Heart left ventricle (tissue), 16 donors: ENCODE measurements at regions of chr11 and their contacts with region 1.

Region 1: GRCh38 chr11:133082851-133083488 is 449.3 kb downstream of the OPCML start:
- DNase-seq: peak; percentile 51 to 83 (median 60)
- ATAC-seq: peak; percentile 47 to 97 (median 86)
- H3K4me3 ChIP-seq: peak overlapping the region; percentile 4 to 51 (median 42)
- H3K27ac ChIP-seq: no peak overlapping the region
- H3K4me1 ChIP-seq: peaks cover 0 to 10% (median 4%) of the 10 kb centered on the region in 12 donors
- H3K27me3 ChIP-seq: peaks cover 3 to 77% (median 15%) of the 10 kb centered on the region in 9 donors
- CTCF ChIP-seq: peak; percentile 20 to 100 (median 82)
- POLR2A ChIP-seq: no peak

Region 2: GRCh38 chr11:133115099-133115498 is 32.1 kb after region 1 on chr11:
- intact Hi-C with region 1: no loop called
- DNase-seq: peak in 4 of 5 donors; percentile 21 to 80 (median 41)
- ATAC-seq: peak in 3 of 4 donors; percentile 68 to 76 (median 73)
- H3K4me3 ChIP-seq: no peak overlapping the region
- H3K27ac ChIP-seq: no peak overlapping the region
- H3K4me1 ChIP-seq: peaks cover 0 to 18% (median 0%) of the 10 kb centered on the region in 12 donors
- H3K27me3 ChIP-seq: no peaks in the 10 kb centered on the region
- CTCF ChIP-seq: no peak
- POLR2A ChIP-seq: no peak

Region 3: GRCh38 chr11:133156986-133157745 is 74.2 kb after region 1 on chr11:
- intact Hi-C with region 1: loop called in 8 of 10 experiments (anchors 2 to 5 kb)
- DNase-seq: peak in 1 of 5 donors; percentile 35
- ATAC-seq: peak; percentile 55 to 71 (median 65)
- H3K4me3 ChIP-seq: no peak overlapping the region
- H3K27ac ChIP-seq: no peak overlapping the region
- H3K4me1 ChIP-seq: no peaks in the 10 kb centered on the region
- H3K27me3 ChIP-seq: peaks cover 0 to 62% (median 14%) of the 10 kb centered on the region in 9 donors
- CTCF ChIP-seq: peak in 10 of 12 donors; percentile 18 to 56 (median 37)
- POLR2A ChIP-seq: no peak

Region 4: DNA sequence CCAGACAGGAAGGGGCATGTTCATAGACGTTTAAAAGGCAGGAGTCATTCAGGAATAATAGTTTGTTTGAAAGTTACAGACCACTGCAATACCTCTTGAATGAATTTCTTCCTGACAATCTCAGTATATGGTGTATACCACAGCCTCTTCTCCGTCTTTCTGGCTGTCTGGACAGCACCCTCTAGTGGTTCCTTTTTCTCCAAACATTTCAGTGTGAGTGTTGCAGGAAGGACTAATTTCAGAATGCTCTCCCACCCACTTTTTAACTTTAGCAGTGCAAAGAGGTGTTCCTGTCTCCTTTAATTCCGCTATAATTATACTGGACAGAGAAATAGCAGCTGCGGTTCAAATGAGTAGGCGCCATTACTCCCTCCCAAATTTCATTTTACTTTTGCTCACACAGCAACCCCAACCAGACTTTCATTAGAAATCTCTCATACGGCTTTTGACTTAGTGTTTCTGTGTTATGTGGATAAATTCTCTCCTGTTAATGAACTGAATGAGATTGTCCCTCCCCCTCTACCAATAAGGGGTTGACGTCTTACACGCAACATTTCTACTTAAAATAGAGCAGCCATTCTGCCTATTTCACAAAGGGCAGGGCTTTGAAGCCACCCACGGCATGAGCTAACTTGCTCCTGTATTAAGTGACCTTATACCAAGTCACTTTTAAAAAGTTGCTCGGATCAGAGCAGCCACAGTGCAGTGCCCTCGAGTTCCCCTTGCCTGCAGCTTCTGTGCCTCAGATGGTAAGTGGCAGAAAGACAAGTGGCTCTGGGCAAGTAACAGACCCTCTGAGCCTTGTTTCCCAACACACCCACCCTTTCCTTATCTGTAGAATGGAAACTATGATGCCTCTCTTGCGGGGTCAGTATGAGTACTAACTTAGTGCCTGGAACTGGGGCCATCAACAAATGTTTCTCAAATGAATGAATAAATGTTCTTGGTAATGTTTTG is 80.8 kb after region 1 on chr11:
- intact Hi-C with region 1: loop called in 8 of 10 experiments (anchors 2 to 5 kb)
- DNase-seq: peak in 2 of 5 donors; percentile 30 to 45
- ATAC-seq: peak; percentile 64 to 93 (median 82)
- H3K4me3 ChIP-seq: peak overlapping the region in 3 of 12 donors; percentile 7 to 35 (median 24)
- H3K27ac ChIP-seq: peak overlapping the region in 3 of 12 donors; percentile 25 to 53 (median 39)
- H3K4me1 ChIP-seq: peaks cover 0 to 8% (median 0%) of the 10 kb centered on the region in 12 donors
- H3K27me3 ChIP-seq: peaks cover 0 to 13% (median 0%) of the 10 kb centered on the region in 9 donors
- CTCF ChIP-seq: peak; percentile 59 to 85 (median 76)
- POLR2A ChIP-seq: no peak

Region 5: DNA sequence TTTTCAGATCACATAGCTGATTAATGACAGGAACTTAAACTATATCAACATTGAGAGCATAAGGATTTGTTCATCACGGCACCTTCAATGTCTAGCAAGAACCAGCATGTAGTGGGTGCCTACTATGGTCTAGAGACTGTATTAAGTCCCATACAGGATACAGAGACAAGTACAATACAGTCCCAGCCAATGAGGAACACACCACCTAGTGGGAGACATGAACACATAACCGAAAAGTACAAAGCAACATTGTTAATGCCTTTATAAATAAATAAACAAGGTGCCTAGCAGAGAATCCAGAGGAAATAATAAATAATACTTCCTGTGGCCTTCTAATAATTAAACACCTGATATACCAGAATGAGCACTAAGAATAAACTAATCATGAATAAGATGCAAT is 537.0 kb after region 1 on chr11:
- intact Hi-C with region 1: loop called in 2 of 10 experiments (anchors 5 to 10 kb)
- DNase-seq: no peak
- ATAC-seq: peak in 3 of 4 donors; percentile 49 to 75 (median 69)
- H3K4me3 ChIP-seq: no peak overlapping the region
- H3K27ac ChIP-seq: no peak overlapping the region
- H3K4me1 ChIP-seq: no peaks in the 10 kb centered on the region
- H3K27me3 ChIP-seq: peaks cover 0 to 5% (median 0%) of the 10 kb centered on the region in 9 donors
- CTCF ChIP-seq: peak in 11 of 12 donors; percentile 13 to 48 (median 34)
- POLR2A ChIP-seq: no peak

Region 6: GRCh38 chr11:133828871-133829270 is 745.9 kb after region 1 on chr11:
- intact Hi-C with region 1: loop called in 8 of 10 experiments (anchors 2 to 5 kb)
- DNase-seq: no peak
- ATAC-seq: no peak
- H3K4me3 ChIP-seq: no peak overlapping the region
- H3K27ac ChIP-seq: no peak overlapping the region
- H3K4me1 ChIP-seq: peaks cover 0 to 6% (median 0%) of the 10 kb centered on the region in 12 donors
- H3K27me3 ChIP-seq: peaks cover 0 to 13% (median 0%) of the 10 kb centered on the region in 9 donors
- CTCF ChIP-seq: no peak
- POLR2A ChIP-seq: no peak

Region 7: DNA sequence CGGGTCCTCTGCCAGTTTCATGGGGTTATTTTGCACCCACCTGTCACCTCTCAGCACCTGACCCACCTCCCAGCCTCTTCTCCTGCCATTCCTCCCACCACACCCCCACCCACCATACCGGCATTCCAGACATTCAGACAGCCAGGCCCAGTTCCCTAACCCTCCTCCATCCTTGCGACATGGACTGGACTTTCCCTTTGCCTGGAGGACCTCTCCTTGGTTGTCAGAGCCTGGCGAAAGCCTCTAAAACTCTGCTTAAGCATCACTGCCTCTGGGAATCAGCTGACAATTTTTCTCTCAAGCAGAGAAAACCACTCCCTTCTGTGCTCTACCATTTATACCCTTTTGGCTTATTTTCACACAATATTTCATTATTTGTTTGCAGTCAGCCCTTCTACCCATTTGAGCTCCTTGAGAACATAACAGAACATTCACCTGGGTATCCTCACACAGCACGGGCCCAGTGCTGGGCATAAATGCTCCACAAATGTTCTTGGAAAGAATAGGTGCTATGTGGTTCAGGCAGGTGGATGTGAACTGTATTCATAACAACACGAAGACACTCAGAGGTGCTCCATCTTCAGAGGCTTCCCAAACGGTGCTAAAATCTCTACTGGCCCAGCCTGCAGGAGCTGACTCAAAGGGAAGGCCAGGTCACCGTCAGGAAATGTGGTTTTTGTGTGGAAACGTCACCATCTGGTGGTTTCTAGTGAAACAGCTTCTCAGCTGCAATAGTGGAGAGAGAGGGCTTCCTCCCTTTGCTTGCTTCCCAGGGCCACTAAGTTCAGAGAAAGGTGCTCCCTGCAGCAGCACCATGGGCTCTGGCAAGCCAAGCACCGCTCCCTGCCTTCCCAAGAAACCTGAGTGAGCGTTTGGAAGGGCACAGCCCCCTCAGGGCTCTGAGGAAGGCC is 752.0 kb after region 1 on chr11:
- intact Hi-C with region 1: loop called in 9 of 10 experiments (anchors 1 to 5 kb)
- DNase-seq: peak in 2 of 5 donors; percentile 44 to 50
- ATAC-seq: peak in 3 of 4 donors; percentile 69 to 90 (median 85)
- H3K4me3 ChIP-seq: no peak overlapping the region
- H3K27ac ChIP-seq: no peak overlapping the region
- H3K4me1 ChIP-seq: peaks cover 0 to 6% (median 0%) of the 10 kb centered on the region in 12 donors
- H3K27me3 ChIP-seq: peaks cover 0 to 16% (median 0%) of the 10 kb centered on the region in 9 donors
- CTCF ChIP-seq: peak; percentile 16 to 75 (median 65)
- POLR2A ChIP-seq: no peak